Thyroid gland (tissue), 4 donors: ENCODE measurements at regions of chr15 and their contacts with region 1.

Region 1: DNA sequence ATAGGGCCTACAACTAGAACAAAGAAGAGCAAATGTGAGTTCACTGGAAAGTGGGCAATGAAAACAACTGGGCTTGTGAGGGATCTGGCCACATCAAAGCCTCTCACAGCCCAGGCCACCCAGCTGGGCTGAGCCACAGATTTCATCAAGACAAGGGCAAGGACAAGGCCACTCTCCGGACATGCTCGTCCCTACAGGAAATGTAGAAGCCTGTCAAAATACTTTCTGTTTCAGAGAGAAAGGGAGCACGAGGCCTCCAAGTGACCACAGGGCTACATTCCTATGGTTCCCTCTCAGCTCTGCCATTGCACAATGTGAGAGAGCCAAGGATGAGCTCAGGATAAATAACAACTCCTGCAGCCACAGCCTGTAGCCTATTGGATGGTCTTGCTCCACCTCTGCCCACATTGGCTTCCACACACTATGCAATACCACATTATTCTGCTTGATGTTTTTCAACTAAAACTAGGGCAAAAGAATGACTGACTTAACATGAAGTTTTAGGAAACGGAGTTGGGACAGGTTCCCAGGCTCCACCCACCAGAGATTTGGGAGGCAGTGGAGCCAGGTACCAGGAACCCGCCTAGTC is 12.1 kb downstream of the TBC1D2B start:
- DNase-seq: peak; percentile 46 to 50
- H3K4me3 ChIP-seq: no peak overlapping the region
- H3K27ac ChIP-seq: peak overlapping the region; percentile 76 to 87 (median 78)
- H3K4me1 ChIP-seq: peaks cover 85 to 95% of the 10 kb centered on the region in 2 donors
- H3K27me3 ChIP-seq: no peaks in the 10 kb centered on the region
- CTCF ChIP-seq: no peak
- POLR2A ChIP-seq: no peak

Region 2: GRCh38 chr15:78149068-78149804 is 83.9 kb after region 1 on chr15 and contains the start of gene IDH3A:
- intact Hi-C with region 1: loop called (anchors 10 kb)
- DNase-seq: peak; percentile 99 to 100
- H3K4me3 ChIP-seq: peak within 1 kb of the TSS; percentile 58 to 87 (median 78)
- H3K27ac ChIP-seq: peak within 1 kb of the TSS; percentile 67 to 87 (median 81)
- H3K4me1 ChIP-seq: peaks cover 15 to 16% of the 10 kb centered on the region in 2 donors
- H3K27me3 ChIP-seq: no peaks in the 10 kb centered on the region
- CTCF ChIP-seq: no peak
- POLR2A ChIP-seq: peak; percentile 32 to 88
- total RNA-seq, gene IDH3A: 55.1 to 155 (median 83.3) TPM